ENCODE measurements at regions of chr2 and their contacts with region 1.

Region 1: GRCh38 chr2:238438856-238439849 is 12.4 kb downstream of the ASB1 start:
- DNase-seq: peak; percentile 84
- ATAC-seq: peak; percentile 93
- H3K4me3 Mint-ChIP-seq: peak overlapping the region; percentile 55
- H3K27ac Mint-ChIP-seq: peak overlapping the region; percentile 80
- H3K4me1 Mint-ChIP-seq: peaks cover 47% of the 10 kb centered on the region
- H3K27me3 Mint-ChIP-seq: no peaks in the 10 kb centered on the region

Region 2: GRCh38 chr2:238670111-238670585 is 231.0 kb after region 1 on chr2:
- CTCF ChIA-PET with region 1: no interaction called
- POLR2A ChIA-PET with region 1: no interaction called
- intact Hi-C with region 1: loop called in 1 of 2 experiments (anchors 1 kb)
- DNase-seq: peak; percentile 61
- ATAC-seq: peak; percentile 93
- H3K4me3 Mint-ChIP-seq: no peak overlapping the region
- H3K27ac Mint-ChIP-seq: no peak overlapping the region
- H3K4me1 Mint-ChIP-seq: peaks cover 12% of the 10 kb centered on the region
- H3K27me3 Mint-ChIP-seq: peaks cover 23% of the 10 kb centered on the region